OCI-LY7 (cell line): ENCODE measurements at regions of chr18 and their contacts with region 1.

Region 1: DNA sequence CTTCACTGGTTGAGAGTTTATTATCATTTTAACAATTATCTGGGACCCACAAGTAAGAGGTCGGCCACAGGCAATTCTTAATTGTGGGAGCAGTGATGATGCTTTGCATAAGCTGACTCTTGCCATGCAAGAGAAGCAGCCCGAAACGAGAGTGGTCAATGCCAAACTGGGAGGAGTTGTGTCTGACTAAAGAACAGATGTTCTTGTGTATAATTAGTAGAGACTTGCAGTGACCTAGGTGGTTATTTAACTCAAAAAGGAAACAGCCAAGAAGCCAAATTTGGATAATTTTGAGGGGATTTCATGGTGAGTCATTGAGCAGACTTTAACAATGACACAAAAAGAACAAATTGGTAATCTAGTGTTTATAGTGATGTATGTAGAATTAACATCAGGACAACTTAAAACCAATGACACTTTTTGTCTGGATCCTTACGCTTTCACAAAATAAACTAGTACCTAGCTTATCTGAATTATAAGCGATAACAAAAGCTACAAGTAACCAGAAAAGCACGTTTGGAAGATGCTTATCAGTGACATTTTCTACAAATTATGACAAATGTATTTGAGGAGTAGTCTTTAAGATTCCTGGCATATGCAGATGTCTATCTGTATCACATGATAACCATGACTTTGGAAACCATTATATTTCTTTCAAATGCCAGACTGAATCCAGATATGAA is 184.7 kb upstream of the DLGAP1 start:
- DNase-seq: peak; percentile 93
- H3K4me3 ChIP-seq: peak overlapping the region; percentile 48
- H3K27ac ChIP-seq: peak overlapping the region; percentile 93
- H3K4me1 ChIP-seq: peaks cover 83% of the 10 kb centered on the region
- CTCF ChIP-seq: no peak

Region 2: DNA sequence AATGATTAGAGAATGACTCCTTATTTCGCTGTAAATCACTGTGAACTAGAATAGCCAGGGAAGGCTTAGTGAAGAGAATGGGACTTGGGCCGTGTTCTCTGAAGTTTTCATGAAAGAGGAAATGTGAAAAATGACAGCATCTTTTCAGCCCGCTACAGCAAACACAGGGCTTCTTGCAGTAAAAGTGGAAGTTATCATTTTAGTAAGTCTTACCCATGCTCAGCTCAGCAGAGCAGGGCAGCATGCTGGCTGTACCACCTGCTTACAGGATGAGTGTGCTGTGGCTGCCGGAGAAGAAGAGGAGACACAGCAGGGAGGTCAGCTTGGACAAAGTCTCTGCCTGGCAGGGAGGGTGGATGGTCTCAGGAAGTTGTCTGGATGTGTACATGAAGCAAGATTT is 116.1 kb after region 1 on chr18:
- CTCF ChIA-PET with region 1: no interaction called
- POLR2A ChIA-PET with region 1: no interaction called
- intact Hi-C with region 1: loop called (anchors 2 kb)
- DNase-seq: peak; percentile 37
- H3K4me3 ChIP-seq: no peak overlapping the region
- H3K27ac ChIP-seq: no peak overlapping the region
- H3K4me1 ChIP-seq: peaks cover 11% of the 10 kb centered on the region
- CTCF ChIP-seq: no peak

Region 3: DNA sequence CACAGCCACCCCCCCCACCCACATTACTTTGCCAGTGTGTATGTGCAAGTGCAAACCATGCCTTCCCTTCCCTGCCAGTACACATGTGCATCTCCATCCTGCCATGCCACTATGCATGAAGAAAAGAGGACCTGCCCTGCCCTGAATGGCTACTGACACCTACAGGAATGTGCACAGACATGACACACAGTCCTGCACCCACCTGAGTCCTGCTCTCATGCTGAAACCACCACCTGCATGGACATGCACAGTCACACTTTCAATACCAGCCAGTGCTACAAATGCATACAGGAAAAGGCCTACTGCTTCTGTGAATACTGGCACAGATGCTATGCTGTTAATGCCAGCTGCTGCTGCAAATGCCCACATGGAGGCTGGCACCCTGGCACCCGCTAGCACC is 149.7 kb after region 1 on chr18:
- CTCF ChIA-PET with region 1: no interaction called
- POLR2A ChIA-PET with region 1: no interaction called
- intact Hi-C with region 1: loop called (anchors 1 kb)
- DNase-seq: peak; percentile 69
- H3K4me3 ChIP-seq: no peak overlapping the region
- H3K27ac ChIP-seq: no peak overlapping the region
- H3K4me1 ChIP-seq: peaks cover 9% of the 10 kb centered on the region
- CTCF ChIP-seq: peak; percentile 37; the same call in 1 of the 2 replicates

Region 4: DNA sequence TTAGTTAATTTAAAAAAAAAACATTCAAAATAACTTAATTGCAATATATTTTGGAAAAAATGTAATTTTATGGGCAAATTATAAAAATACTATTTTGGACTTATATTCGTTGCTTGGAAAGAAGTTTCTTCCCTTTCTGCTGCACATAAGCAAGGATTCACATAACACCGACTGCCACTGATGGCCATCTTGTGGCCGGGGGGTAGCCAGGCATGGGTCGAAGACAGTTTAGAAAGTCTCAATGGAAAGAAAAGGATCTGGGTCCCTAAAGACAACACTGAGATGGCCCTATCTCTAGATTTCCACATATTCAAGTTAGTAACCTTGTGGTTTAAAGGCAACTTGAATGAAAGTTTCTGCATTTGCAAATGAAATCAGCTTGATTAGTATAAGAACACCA is 238.7 kb after region 1 on chr18:
- CTCF ChIA-PET with region 1: no interaction called
- POLR2A ChIA-PET with region 1: no interaction called
- intact Hi-C with region 1: no loop called
- DNase-seq: no peak
- H3K4me3 ChIP-seq: no peak overlapping the region
- H3K27ac ChIP-seq: no peak overlapping the region
- H3K4me1 ChIP-seq: no peaks in the 10 kb centered on the region
- CTCF ChIP-seq: 0 out of 2 replicates have a peak, but pooled peaks have one; percentile 28

Region 5: GRCh38 chr18:5288517-5288935 is 648.8 kb after region 1 on chr18:
- CTCF ChIA-PET with region 1: interaction called, 3 read pairs
- POLR2A ChIA-PET with region 1: no interaction called
- intact Hi-C with region 1: loop called (anchors 2 kb)
- DNase-seq: peak; percentile 88
- H3K4me3 ChIP-seq: peak overlapping the region; percentile 52
- H3K27ac ChIP-seq: peak overlapping the region; percentile 89
- H3K4me1 ChIP-seq: peaks cover 93% of the 10 kb centered on the region
- CTCF ChIP-seq: no peak